GM18951 (cell line): ENCODE measurements at regions of chr14 and their contacts with region 1.

Region 1: GRCh38 chr14:81170104-81170828 is 50.5 kb downstream of the GTF2A1 start:
- POLR2A ChIP-seq: peak; percentile 84

Region 2: GRCh38 chr14:80987235-80988032 is 182.8 kb before region 1 on chr14:
- in situ Hi-C with region 1: loop called (anchors 25 kb)
- POLR2A ChIP-seq: no peak

Region 3: GRCh38 chr14:81042438-81042837 is 127.8 kb before region 1 on chr14:
- in situ Hi-C with region 1: no loop called
- POLR2A ChIP-seq: no peak